ENCODE measurements at regions of chr16 and their contacts with region 1.

Region 1: GRCh38 chr16:75764154-75764768 is 38.0 kb upstream of the CPHXL start:
- DNase-seq: no peak
- H3K4me3 ChIP-seq: no peak overlapping the region
- H3K27ac ChIP-seq: no peak overlapping the region
- H3K4me1 ChIP-seq: no peaks in the 10 kb centered on the region
- H3K27me3 ChIP-seq: no peaks in the 10 kb centered on the region
- CTCF ChIP-seq: peak; percentile 84

Region 2: DNA sequence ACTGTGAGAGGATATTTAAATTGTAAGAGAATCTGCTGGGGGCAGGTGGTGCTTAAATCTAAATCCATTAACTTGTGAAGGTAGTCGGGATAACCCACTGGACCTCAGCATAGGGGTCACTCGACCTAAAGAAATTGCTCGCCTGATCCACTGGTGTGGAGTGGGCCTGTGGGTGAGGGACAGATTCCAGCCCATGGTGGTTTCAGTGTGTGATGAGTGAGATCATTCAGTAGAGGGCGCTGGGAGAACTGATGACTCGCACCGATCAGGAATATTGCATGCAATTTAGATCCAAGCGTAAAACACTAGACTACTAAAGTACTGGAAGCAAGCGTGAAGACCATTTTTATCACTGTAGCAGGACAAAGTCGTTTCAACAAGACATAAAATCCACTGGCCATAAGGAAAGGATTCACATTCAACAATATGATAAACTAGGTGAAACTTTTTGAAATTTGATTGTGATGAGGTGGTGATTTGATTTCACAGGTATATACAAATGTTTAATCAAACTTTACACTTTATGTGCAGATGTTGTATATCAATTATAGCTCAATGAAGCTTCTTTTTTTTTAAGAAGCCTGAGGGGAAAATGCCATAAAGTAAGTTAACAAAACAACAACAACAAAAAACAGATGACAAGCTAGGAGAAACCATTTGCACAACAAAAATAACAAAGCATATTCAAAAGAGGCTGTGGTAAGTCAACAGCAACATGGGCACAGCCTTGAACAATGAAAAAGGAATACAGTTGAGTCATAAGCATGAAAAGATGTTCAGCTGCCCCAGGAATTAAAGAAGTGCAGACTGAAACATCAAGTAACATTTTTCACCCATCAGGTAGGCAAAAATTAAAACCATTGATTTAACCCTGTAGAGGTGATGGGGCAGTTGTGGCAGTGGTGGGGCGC is 292.3 kb before region 1 on chr16:
- intact Hi-C with region 1: loop called (anchors 5 kb)
- DNase-seq: no peak
- H3K4me3 ChIP-seq: no peak overlapping the region
- H3K27ac ChIP-seq: no peak overlapping the region
- H3K4me1 ChIP-seq: no peaks in the 10 kb centered on the region
- H3K27me3 ChIP-seq: no peaks in the 10 kb centered on the region
- CTCF ChIP-seq: peak; percentile 87

Region 3: GRCh38 chr16:75647492-75648264 is 116.6 kb before region 1 on chr16 and contains the starts of genes KARS1 and TERF2IP:
- intact Hi-C with region 1: loop called (anchors 10 kb)
- DNase-seq: peak; percentile 92
- H3K4me3 ChIP-seq: peak within 1 kb of the TSS; percentile 97
- H3K27ac ChIP-seq: peak within 1 kb of the TSS; percentile 96
- H3K4me1 ChIP-seq: peaks cover 91% of the 10 kb centered on the region
- H3K27me3 ChIP-seq: no peaks in the 10 kb centered on the region
- CTCF ChIP-seq: no peak
- total RNA-seq, gene KARS1: 127 TPM
- total RNA-seq, gene TERF2IP: 60.1 TPM

Measured in left ventricle myocardium inferior (tissue), 1 donor.